CD4-positive, alpha-beta memory T cell (primary cell): ENCODE measurements at regions of chr17 and their contacts with region 1.

Region 1: GRCh38 chr17:77957857-77958715 is at the start of gene TNRC6C:
- DNase-seq: peak; percentile 99 to 100 (median 100)
- H3K4me3 ChIP-seq: peak within 1 kb of the TSS; percentile 80 to 92
- H3K4me3 Mint-ChIP-seq: peak within 1 kb of the TSS; percentile 93 to 100 (median 98)
- H3K27ac ChIP-seq: peak within 1 kb of the TSS; percentile 68
- H3K27ac Mint-ChIP-seq: peak within 1 kb of the TSS; percentile 91 to 97 (median 95)
- H3K4me1 ChIP-seq: peaks cover 42% of the 10 kb centered on the region
- H3K4me1 Mint-ChIP-seq: peaks cover 25 to 51% (median 38%) of the 10 kb centered on the region in 4 donors
- H3K27me3 ChIP-seq: no peaks in the 10 kb centered on the region
- H3K27me3 Mint-ChIP-seq: peaks cover 0 to 4% of the 10 kb centered on the region in 2 donors
- total RNA-seq, gene TNRC6C: 105 to 112 TPM

Region 2: DNA sequence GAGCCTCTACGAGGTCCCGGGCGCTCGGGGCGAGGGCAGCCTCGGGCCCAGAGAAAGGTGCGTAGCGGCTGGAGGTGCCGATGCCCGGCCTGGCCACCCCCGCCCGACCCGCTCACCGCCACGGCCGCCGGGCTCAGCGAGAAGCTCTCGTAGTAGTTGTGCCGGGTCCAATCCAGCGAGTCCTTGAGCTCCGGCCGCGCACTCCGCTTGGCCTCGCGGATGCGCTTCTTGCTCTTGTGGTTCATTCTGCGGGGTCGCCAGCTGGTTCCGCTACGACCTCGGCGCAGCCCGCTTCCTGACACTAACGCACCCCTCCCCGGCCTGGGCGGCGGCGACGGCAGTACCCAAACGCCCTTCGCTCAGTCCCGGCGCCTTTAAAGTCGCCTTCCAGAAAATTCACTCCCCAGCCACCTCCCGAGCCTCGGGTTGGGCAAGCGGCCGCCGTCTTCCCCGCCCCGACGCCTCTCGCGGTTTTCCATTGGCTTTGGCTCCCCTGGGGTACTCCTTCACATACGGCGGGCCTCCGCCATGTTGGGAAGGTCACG is 1231.8 kb before region 1 on chr17 and contains the start of gene JMJD6:
- CTCF ChIA-PET with region 1: no interaction called
- POLR2A ChIA-PET with region 1: interaction called, 11 read pairs
- intact Hi-C with region 1: no loop called
- DNase-seq: peak in 1 of 5 donors; percentile 98
- H3K4me3 ChIP-seq: peak within 1 kb of the TSS; percentile 52 to 95
- H3K4me3 Mint-ChIP-seq: peak within 1 kb of the TSS; percentile 94 to 99 (median 97)
- H3K27ac ChIP-seq: peak within 1 kb of the TSS; percentile 97
- H3K27ac Mint-ChIP-seq: peak within 1 kb of the TSS; percentile 98 to 100 (median 99)
- H3K4me1 ChIP-seq: peaks cover 71% of the 10 kb centered on the region
- H3K4me1 Mint-ChIP-seq: peaks cover 24 to 76% (median 51%) of the 10 kb centered on the region in 4 donors
- H3K27me3 ChIP-seq: no peaks in the 10 kb centered on the region
- H3K27me3 Mint-ChIP-seq: no peaks in the 10 kb centered on the region
- total RNA-seq, gene JMJD6: 59.4 to 62.1 TPM

Region 3: DNA sequence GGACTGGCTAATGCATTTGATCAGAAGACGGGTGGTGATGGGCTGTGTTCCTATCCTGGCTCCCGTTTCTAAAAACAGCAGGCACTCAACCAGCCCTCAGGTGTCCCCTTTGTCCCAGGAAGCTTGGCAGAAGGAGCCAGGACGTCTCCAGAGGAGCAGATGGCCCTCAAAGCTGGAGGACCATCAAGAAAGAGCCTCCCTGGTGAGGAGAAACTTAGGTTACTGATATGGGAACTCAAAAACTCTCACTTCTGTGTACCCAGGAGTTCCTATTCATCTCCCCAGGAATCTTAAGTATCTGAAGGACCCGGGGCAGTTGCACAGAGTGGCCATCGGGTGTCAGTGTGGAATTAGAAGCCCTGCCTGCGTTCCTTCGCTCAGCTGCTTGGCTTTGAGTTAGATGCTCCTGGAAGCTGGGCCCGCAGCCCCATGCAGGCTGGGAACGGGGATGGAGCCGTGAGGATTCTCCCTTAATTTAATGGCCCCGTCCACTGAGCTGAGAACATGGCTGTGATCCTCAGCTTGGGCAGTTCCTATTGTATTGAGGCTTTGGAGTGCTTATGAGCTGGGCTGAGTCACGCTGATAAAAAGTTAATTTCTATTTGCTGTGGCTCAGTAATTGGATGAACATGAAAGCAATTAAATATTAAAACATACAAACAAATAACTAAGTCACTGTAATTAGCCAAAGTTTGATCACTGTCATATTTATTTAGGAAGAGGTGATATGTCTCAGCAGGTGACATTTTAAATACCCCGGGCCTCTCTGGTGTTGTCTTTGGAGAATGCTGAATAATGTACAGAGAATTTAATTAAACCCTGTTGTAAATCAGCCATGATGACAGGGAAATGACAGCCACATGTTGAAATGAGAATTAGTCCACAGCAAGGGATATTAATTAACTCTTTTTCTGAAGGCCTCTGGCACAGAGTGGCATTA is 415.3 kb before region 1 on chr17:
- CTCF ChIA-PET with region 1: interaction called, 3 read pairs
- POLR2A ChIA-PET with region 1: interaction called, 13 read pairs
- intact Hi-C with region 1: no loop called
- DNase-seq: peak; percentile 49 to 60 (median 57)
- H3K4me3 ChIP-seq: no peak overlapping the region
- H3K4me3 Mint-ChIP-seq: no peak overlapping the region
- H3K27ac ChIP-seq: no peak overlapping the region
- H3K27ac Mint-ChIP-seq: peak overlapping the region in 1 of 7 donors; percentile 9
- H3K4me1 ChIP-seq: no peaks in the 10 kb centered on the region
- H3K4me1 Mint-ChIP-seq: no peaks in the 10 kb centered on the region
- H3K27me3 ChIP-seq: peaks cover 7% of the 10 kb centered on the region
- H3K27me3 Mint-ChIP-seq: peaks cover 3 to 14% of the 10 kb centered on the region in 2 donors

Region 4: GRCh38 chr17:77772461-77772897 is 185.6 kb before region 1 on chr17:
- CTCF ChIA-PET with region 1: interaction called, 18 read pairs
- POLR2A ChIA-PET with region 1: interaction called, 42 read pairs
- intact Hi-C with region 1: loop called (anchors 1 kb)
- DNase-seq: peak; percentile 59 to 63 (median 60)
- H3K4me3 ChIP-seq: no peak overlapping the region
- H3K4me3 Mint-ChIP-seq: peak overlapping the region in 2 of 8 donors; percentile 0 to 47
- H3K27ac ChIP-seq: no peak overlapping the region
- H3K27ac Mint-ChIP-seq: peak overlapping the region in 3 of 7 donors; percentile 38 to 57 (median 38)
- H3K4me1 ChIP-seq: peaks cover 8% of the 10 kb centered on the region
- H3K4me1 Mint-ChIP-seq: peaks cover 7 to 20% (median 14%) of the 10 kb centered on the region in 4 donors
- H3K27me3 ChIP-seq: no peaks in the 10 kb centered on the region
- H3K27me3 Mint-ChIP-seq: peaks cover 1 to 2% of the 10 kb centered on the region in 2 donors

Region 5: GRCh38 chr17:77875881-77876509 is 82.1 kb before region 1 on chr17:
- CTCF ChIA-PET with region 1: interaction called, 5 read pairs
- POLR2A ChIA-PET with region 1: interaction called, 116 read pairs
- intact Hi-C with region 1: no loop called
- DNase-seq: no peak
- H3K4me3 ChIP-seq: no peak overlapping the region
- H3K4me3 Mint-ChIP-seq: peak overlapping the region in 2 of 8 donors; percentile 30 to 67
- H3K27ac ChIP-seq: no peak overlapping the region
- H3K27ac Mint-ChIP-seq: peak overlapping the region in 4 of 7 donors; percentile 53 to 86 (median 74)
- H3K4me1 ChIP-seq: peaks cover 90% of the 10 kb centered on the region
- H3K4me1 Mint-ChIP-seq: peaks cover 53 to 99% (median 75%) of the 10 kb centered on the region in 4 donors
- H3K27me3 ChIP-seq: no peaks in the 10 kb centered on the region
- H3K27me3 Mint-ChIP-seq: no peaks in the 10 kb centered on the region

Region 6: GRCh38 chr17:77935121-77935571 is 22.9 kb before region 1 on chr17:
- CTCF ChIA-PET with region 1: no interaction called
- POLR2A ChIA-PET with region 1: interaction called, 17 read pairs
- intact Hi-C with region 1: no loop called
- DNase-seq: peak in 4 of 5 donors; percentile 16 to 21 (median 19)
- H3K4me3 ChIP-seq: no peak overlapping the region
- H3K4me3 Mint-ChIP-seq: peak overlapping the region in 2 of 8 donors; percentile 7 to 39
- H3K27ac ChIP-seq: no peak overlapping the region
- H3K27ac Mint-ChIP-seq: no peak overlapping the region
- H3K4me1 ChIP-seq: peaks cover 11% of the 10 kb centered on the region
- H3K4me1 Mint-ChIP-seq: peaks cover 10 to 36% (median 21%) of the 10 kb centered on the region in 4 donors
- H3K27me3 ChIP-seq: no peaks in the 10 kb centered on the region
- H3K27me3 Mint-ChIP-seq: peaks cover 0 to 5% of the 10 kb centered on the region in 2 donors

Region 7: DNA sequence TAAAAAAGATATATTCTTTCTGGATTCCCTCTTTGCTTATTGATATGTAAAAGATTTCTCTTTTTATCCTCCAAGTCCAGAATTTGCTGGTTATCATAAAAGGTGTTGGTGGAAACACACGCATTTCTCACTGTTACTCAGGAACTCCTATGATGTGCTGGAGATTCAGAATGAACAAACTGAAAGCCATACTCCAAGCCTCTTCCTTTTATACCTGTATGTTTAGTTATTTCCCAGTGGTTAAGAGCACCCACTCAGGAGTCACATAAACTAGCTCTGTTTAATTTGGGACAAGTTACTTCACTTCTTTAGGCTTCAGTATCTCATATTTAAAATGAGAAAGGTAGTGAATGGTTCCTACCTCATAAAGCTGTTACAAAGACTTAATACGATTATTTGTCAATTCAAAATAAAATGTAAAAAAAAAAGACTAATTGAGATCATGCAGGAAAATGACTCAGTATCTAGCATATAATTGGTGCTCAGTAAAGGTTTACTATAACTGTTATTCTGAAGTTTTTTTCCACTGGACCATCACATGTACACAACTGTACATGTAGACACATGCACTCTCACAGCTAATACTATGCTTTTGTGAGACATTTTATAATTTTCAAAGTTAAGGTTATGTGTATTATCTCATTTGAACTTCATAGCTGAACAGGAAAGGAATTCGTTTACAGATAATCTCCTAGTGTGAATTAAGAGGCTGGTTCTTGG is 47.5 kb after region 1 on chr17:
- CTCF ChIA-PET with region 1: interaction called, 5 read pairs
- POLR2A ChIA-PET with region 1: interaction called, 63 read pairs
- intact Hi-C with region 1: loop called (anchors 5 kb)
- DNase-seq: no peak
- H3K4me3 ChIP-seq: no peak overlapping the region
- H3K4me3 Mint-ChIP-seq: no peak overlapping the region
- H3K27ac ChIP-seq: no peak overlapping the region
- H3K27ac Mint-ChIP-seq: peak overlapping the region; percentile 15 to 82 (median 52)
- H3K4me1 ChIP-seq: peaks cover 13% of the 10 kb centered on the region
- H3K4me1 Mint-ChIP-seq: peaks cover 25 to 61% (median 31%) of the 10 kb centered on the region in 4 donors
- H3K27me3 ChIP-seq: no peaks in the 10 kb centered on the region
- H3K27me3 Mint-ChIP-seq: no peaks in the 10 kb centered on the region

Region 8: DNA sequence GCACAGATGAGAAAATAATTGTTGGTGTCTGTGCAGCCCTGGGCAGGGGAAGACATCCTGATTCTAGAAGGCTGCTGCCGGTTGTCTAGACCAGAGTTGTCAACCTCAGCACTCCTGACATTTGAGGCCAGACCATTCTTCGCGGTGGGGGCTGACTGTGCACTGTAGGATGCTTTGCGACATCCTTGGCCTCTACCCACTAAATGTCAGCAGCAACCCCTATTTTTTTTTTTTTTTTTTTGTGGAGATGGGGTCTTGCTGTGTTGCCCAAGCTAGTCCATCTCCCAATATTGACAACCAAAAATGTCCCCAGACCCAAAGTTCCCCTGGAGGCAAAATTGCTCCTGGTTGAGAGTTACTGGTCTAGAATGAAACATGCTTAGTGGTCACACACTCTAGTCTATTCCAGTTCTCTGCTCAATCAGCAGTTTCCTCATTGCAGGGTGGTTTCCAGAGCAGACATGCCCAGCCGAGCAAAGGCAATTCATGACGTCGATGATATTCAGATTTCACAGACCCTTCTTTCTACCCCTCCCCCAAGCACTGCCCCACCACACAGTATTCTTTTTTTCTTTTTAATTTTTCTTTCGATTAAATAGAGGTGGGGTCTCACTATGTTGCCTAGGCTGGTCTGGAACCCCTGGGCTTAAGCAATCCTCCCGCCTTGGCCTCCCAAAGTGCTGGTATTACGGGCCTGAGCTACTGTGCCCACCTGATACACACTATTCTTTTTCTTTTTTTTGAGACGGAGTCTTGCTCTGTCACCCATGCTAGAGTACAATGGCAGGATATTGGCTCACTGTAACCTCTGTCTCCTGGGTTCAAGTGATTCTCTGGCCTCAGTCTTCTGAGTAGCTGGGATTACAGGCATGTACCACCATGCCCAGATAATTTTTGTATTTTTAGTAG is 197.1 kb after region 1 on chr17:
- CTCF ChIA-PET with region 1: no interaction called
- POLR2A ChIA-PET with region 1: no interaction called
- intact Hi-C with region 1: no loop called
- DNase-seq: no peak
- H3K4me3 ChIP-seq: no peak overlapping the region
- H3K4me3 Mint-ChIP-seq: no peak overlapping the region
- H3K27ac ChIP-seq: no peak overlapping the region
- H3K27ac Mint-ChIP-seq: peak overlapping the region in 3 of 7 donors; percentile 13 to 50 (median 42)
- H3K4me1 ChIP-seq: no peaks in the 10 kb centered on the region
- H3K4me1 Mint-ChIP-seq: peaks cover 5 to 8% (median 7%) of the 10 kb centered on the region in 4 donors
- H3K27me3 ChIP-seq: no peaks in the 10 kb centered on the region
- H3K27me3 Mint-ChIP-seq: no peaks in the 10 kb centered on the region